Right lobe of liver (tissue), 6 donors: ENCODE measurements at regions of chr19 and their contacts with region 1.

Region 1: GRCh38 chr19:49255674-49256073 is 69.3 kb downstream of the SLC6A16 start:
- DNase-seq: no peak
- ATAC-seq: peak in 1 of 4 donors; percentile 10
- H3K4me3 ChIP-seq: no peak overlapping the region
- H3K27ac ChIP-seq: no peak overlapping the region
- H3K4me1 ChIP-seq: no peaks in the 10 kb centered on the region
- H3K27me3 ChIP-seq: no peaks in the 10 kb centered on the region
- CTCF ChIP-seq: no peak
- POLR2A ChIP-seq: no peak

Region 2: GRCh38 chr19:48705431-48705830 is 550.2 kb before region 1 on chr19:
- intact Hi-C with region 1: no loop called
- DNase-seq: no peak
- ATAC-seq: no peak
- H3K4me3 ChIP-seq: no peak overlapping the region
- H3K27ac ChIP-seq: no peak overlapping the region
- H3K4me1 ChIP-seq: no peaks in the 10 kb centered on the region
- H3K27me3 ChIP-seq: no peaks in the 10 kb centered on the region
- CTCF ChIP-seq: no peak
- POLR2A ChIP-seq: no peak

Region 3: DNA sequence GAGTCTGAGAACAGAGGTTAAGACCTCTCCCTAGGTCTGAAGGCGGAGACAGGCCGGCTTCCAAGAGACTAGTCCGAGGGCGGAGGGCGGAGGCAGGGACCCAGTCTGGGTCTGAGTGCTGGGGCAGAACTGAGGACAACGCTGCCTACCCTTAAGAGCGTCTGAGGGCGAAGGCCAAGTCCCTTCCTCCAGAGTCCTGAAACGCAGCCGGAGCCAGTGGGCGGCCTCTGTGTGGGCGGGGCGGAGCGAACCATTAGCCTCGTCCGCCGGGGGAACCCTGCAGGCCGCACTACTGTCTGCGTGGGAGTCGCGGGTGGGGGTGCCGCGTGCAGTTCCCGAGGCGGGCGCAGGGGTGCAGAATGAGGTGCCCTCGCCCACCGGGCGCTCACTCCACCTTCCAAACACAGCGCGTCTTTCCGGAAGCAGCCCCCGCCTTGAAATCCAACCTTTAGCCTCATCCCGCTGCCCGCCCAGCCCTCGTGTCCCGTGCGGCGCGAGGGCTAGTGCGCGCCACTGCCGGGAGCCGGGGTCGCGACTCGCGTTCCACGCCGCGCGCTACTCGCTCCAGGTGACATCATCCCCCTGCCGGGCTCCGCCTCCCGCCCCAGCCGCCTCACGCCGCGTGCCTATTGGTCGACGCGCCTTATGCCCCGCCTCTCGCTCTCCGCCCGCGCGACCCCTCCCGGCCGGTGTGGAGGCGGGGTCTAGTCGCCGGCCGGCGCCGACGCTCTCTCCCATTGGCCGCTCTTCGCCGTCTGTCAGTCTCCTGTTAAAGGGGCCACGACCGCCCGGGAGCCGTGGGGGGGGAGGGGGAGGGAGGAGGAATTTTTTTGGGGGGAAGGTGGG is 136.9 kb before region 1 on chr19 and contains the start of gene C19orf73:
- intact Hi-C with region 1: no loop called
- DNase-seq: peak; percentile 96 to 97 (median 97)
- ATAC-seq: peak; percentile 86 to 92 (median 90)
- H3K4me3 ChIP-seq: peak within 1 kb of the TSS; percentile 51 to 59 (median 56)
- H3K27ac ChIP-seq: peak within 1 kb of the TSS; percentile 90 to 96 (median 91)
- H3K4me1 ChIP-seq: peaks cover 0 to 21% (median 8%) of the 10 kb centered on the region in 4 donors
- H3K27me3 ChIP-seq: no peaks in the 10 kb centered on the region
- CTCF ChIP-seq: peak in 3 of 4 donors; percentile 13 to 14 (median 14)
- POLR2A ChIP-seq: peak; percentile 73
- total RNA-seq, gene C19orf73: 0.73 to 8.1 (median 1.5) TPM

Region 4: GRCh38 chr19:49200238-49200862 is 55.3 kb before region 1 on chr19:
- intact Hi-C with region 1: no loop called
- DNase-seq: peak in 1 of 3 donors; percentile 25
- ATAC-seq: peak in 2 of 4 donors; percentile 26 to 62
- H3K4me3 ChIP-seq: no peak overlapping the region
- H3K27ac ChIP-seq: no peak overlapping the region
- H3K4me1 ChIP-seq: no peaks in the 10 kb centered on the region
- H3K27me3 ChIP-seq: no peaks in the 10 kb centered on the region
- CTCF ChIP-seq: no peak
- POLR2A ChIP-seq: no peak

Region 5: GRCh38 chr19:49413348-49413747 is 157.7 kb after region 1 on chr19:
- intact Hi-C with region 1: no loop called
- DNase-seq: no peak
- ATAC-seq: no peak
- H3K4me3 ChIP-seq: no peak overlapping the region
- H3K27ac ChIP-seq: no peak overlapping the region
- H3K4me1 ChIP-seq: no peaks in the 10 kb centered on the region
- H3K27me3 ChIP-seq: no peaks in the 10 kb centered on the region
- CTCF ChIP-seq: no peak
- POLR2A ChIP-seq: no peak

Region 6: GRCh38 chr19:49430678-49431329 is 175.1 kb after region 1 on chr19:
- intact Hi-C with region 1: loop called in 1 of 2 experiments (anchors 10 kb)
- DNase-seq: no peak
- ATAC-seq: no peak
- H3K4me3 ChIP-seq: no peak overlapping the region
- H3K27ac ChIP-seq: no peak overlapping the region
- H3K4me1 ChIP-seq: no peaks in the 10 kb centered on the region
- H3K27me3 ChIP-seq: peaks cover 7 to 20% of the 10 kb centered on the region in 2 donors
- CTCF ChIP-seq: peak in 1 of 4 donors; percentile 6
- POLR2A ChIP-seq: no peak